Transverse colon (tissue), 4 donors: ENCODE measurements at regions of chr5 and their contacts with region 1.

Region 1: GRCh38 chr5:142888469-142889085 is 118.4 kb downstream of the ARHGAP26 start:
- DNase-seq: no peak
- H3K4me3 ChIP-seq: no peak overlapping the region
- H3K27ac ChIP-seq: no peak overlapping the region
- H3K4me1 ChIP-seq: no peaks in the 10 kb centered on the region
- H3K27me3 ChIP-seq: no peaks in the 10 kb centered on the region
- CTCF ChIP-seq: peak; percentile 72 to 78 (median 73)
- EP300 ChIP-seq: no peak
- POLR2A ChIP-seq: no peak

Region 2: DNA sequence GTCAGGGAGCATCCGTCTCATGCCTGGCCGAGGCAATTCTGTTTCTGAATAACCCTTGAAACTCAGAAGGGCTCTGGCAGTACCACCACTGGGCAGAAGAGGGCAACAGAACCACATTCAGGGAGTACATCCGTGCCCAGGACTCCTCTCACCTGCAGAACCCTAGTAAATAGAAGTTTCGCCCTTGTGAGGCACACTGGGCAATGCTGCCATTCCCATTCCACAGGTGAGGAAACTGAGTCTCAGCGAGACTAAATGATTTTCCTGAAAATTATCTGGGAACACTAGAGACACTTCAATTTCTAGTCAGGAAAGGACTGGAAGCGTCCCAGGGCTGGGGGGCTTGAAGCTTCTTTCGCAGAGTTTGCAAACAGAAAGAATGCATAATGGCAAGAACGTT is 277.4 kb before region 1 on chr5:
- in situ Hi-C with region 1: loop called in 2 of 4 experiments (anchors 25 kb)
- intact Hi-C with region 1: no loop called
- DNase-seq: peak; percentile 73
- H3K4me3 ChIP-seq: no peak overlapping the region
- H3K27ac ChIP-seq: no peak overlapping the region
- H3K4me1 ChIP-seq: no peaks in the 10 kb centered on the region
- H3K27me3 ChIP-seq: peaks cover 16% of the 10 kb centered on the region
- CTCF ChIP-seq: peak; percentile 76 to 87 (median 83)
- EP300 ChIP-seq: no peak
- POLR2A ChIP-seq: no peak

Region 3: GRCh38 chr5:142713121-142713706 is 175.4 kb before region 1 on chr5:
- in situ Hi-C with region 1: loop called in 1 of 4 experiments (anchors 10 kb)
- intact Hi-C with region 1: loop called (anchors 5 kb)
- DNase-seq: peak; percentile 92
- H3K4me3 ChIP-seq: peak overlapping the region in 3 of 4 donors; percentile 35 to 63 (median 41)
- H3K27ac ChIP-seq: peak overlapping the region; percentile 67 to 82 (median 72)
- H3K4me1 ChIP-seq: peaks cover 0 to 12% (median under 1%) of the 10 kb centered on the region in 4 donors
- H3K27me3 ChIP-seq: peaks cover 6% of the 10 kb centered on the region
- CTCF ChIP-seq: peak; percentile 93 to 98 (median 96)
- EP300 ChIP-seq: no peak
- POLR2A ChIP-seq: no peak

Region 4: GRCh38 chr5:142726188-142726731 is 162.3 kb before region 1 on chr5:
- in situ Hi-C with region 1: loop called in 3 of 4 experiments (anchors 10 kb)
- intact Hi-C with region 1: no loop called
- DNase-seq: no peak
- H3K4me3 ChIP-seq: no peak overlapping the region
- H3K27ac ChIP-seq: no peak overlapping the region
- H3K4me1 ChIP-seq: peaks cover 0 to 8% (median 0%) of the 10 kb centered on the region in 4 donors
- H3K27me3 ChIP-seq: no peaks in the 10 kb centered on the region
- CTCF ChIP-seq: no peak
- EP300 ChIP-seq: no peak
- POLR2A ChIP-seq: no peak

Region 5: GRCh38 chr5:142753116-142753631 is 135.4 kb before region 1 on chr5:
- in situ Hi-C with region 1: loop called in 1 of 4 experiments (anchors 10 kb)
- intact Hi-C with region 1: no loop called
- DNase-seq: peak; percentile 23
- H3K4me3 ChIP-seq: no peak overlapping the region
- H3K27ac ChIP-seq: peak overlapping the region; percentile 28 to 54 (median 42)
- H3K4me1 ChIP-seq: peaks cover 6 to 16% (median 7%) of the 10 kb centered on the region in 4 donors
- H3K27me3 ChIP-seq: no peaks in the 10 kb centered on the region
- CTCF ChIP-seq: no peak
- EP300 ChIP-seq: no peak
- POLR2A ChIP-seq: no peak

Region 6: GRCh38 chr5:142922223-142922952 is 33.8 kb after region 1 on chr5:
- in situ Hi-C with region 1: no loop called
- intact Hi-C with region 1: loop called (anchors 5 kb)
- DNase-seq: no peak
- H3K4me3 ChIP-seq: no peak overlapping the region
- H3K27ac ChIP-seq: no peak overlapping the region
- H3K4me1 ChIP-seq: peaks cover 0 to 18% (median 2%) of the 10 kb centered on the region in 4 donors
- H3K27me3 ChIP-seq: no peaks in the 10 kb centered on the region
- CTCF ChIP-seq: peak in 4 of 5 experiments; percentile 36 to 46 (median 44)
- EP300 ChIP-seq: no peak
- POLR2A ChIP-seq: no peak